Activated CD4-positive, alpha-beta memory T cell treated with anti-CD3 and anti-CD28 coated beads for 36 hours (primary cell): ENCODE measurements at regions of chr2 and their contacts with region 1.

Region 1: DNA sequence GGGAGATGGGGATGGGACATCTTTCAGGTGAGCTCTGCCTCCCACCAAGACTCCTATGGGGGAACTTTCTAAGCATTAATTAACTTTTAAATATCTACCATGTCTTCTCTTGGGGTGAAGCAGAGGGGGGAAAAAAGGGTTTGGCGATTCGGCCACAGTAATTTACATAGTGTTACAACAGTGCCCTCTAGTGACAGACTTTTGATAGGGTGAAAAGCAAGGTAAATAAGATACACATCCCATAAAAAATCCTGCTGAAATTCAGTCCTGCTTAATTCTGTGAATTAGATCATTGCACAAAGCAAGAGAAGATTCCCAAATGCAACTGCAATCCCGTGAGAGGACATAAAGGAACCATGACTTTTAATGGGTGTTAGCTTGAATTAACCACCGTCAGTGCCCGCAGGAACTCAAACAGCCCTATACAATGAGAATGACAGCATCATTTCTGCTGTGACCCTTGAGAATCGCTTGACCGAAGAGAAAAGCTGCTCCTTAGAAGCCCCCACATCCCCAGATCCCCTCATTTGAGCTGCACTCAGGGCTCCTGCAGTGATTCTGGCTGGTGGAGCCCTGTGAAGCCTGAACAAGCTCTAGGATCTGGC is 32.8 kb downstream of the FAM124B start:
- DNase-seq: no peak
- H3K4me3 Mint-ChIP-seq: no peak overlapping the region
- H3K27ac Mint-ChIP-seq: no peak overlapping the region
- H3K4me1 Mint-ChIP-seq: no peaks in the 10 kb centered on the region
- H3K27me3 Mint-ChIP-seq: no peaks in the 10 kb centered on the region

Region 2: DNA sequence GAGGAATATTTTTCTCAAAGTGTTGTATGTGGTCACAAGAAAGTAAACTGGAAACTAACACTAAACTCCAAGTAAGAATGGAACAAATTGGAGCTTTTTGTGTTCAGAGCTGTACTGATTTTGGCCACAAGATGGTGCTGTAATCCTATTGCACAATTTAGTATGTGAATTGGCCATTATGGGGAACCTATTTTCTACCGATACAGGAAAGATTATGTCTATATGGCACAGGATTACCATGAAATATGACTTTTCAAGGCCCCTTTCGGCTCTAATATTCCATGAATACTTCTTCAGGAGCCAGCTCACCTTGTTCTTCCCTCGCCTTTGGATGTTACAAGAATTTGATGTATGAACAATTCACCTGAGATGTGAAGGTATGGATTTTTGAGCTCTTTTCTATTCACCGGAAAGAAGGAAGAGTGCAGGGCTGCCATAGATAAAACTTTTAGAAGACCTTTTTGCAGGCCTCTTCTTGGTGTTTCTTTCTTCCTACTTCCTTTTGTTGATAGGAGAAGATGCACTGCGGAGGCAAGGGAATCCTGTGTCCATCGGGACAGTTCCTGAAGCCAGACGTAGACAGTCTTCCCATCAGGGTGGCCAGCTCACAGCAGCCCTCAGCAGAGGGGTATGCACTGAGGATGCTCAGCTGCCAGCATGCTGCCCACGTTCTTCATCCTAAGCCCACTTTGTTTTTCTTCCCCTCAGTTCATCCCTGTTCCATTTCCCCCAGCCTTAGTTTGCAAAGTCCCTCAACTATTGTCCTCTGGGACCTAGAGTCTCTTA is 398.6 kb before region 1 on chr2:
- CTCF ChIA-PET with region 1: interaction called, 16 read pairs
- POLR2A ChIA-PET with region 1: no interaction called
- intact Hi-C with region 1: loop called (anchors 2 kb)
- DNase-seq: peak; percentile 42
- H3K4me3 Mint-ChIP-seq: no peak overlapping the region
- H3K27ac Mint-ChIP-seq: no peak overlapping the region
- H3K4me1 Mint-ChIP-seq: peaks cover 12% of the 10 kb centered on the region
- H3K27me3 Mint-ChIP-seq: no peaks in the 10 kb centered on the region

Region 3: DNA sequence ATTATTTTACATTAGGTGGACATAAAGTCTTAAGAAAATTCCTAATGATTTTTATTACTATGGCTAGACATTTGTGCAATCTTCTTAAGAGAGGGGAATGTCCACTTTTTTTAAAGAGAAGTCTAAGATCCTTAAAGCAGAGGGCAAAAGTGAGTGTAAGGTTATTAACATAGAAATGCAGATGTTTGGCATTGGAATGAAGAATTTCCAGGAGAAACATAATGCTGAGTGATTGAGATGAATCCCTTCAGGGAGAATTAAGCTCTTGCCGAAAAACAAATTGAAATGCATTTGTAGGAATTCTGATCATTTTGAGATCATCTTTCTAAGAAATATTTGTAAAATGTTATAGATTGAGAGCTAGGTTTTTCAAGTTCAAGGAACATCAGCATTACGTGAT is 17.7 kb after region 1 on chr2:
- CTCF ChIA-PET with region 1: interaction called, 15 read pairs
- POLR2A ChIA-PET with region 1: no interaction called
- intact Hi-C with region 1: no loop called
- DNase-seq: no peak
- H3K4me3 Mint-ChIP-seq: no peak overlapping the region
- H3K27ac Mint-ChIP-seq: no peak overlapping the region
- H3K4me1 Mint-ChIP-seq: no peaks in the 10 kb centered on the region
- H3K27me3 Mint-ChIP-seq: no peaks in the 10 kb centered on the region

Region 4: DNA sequence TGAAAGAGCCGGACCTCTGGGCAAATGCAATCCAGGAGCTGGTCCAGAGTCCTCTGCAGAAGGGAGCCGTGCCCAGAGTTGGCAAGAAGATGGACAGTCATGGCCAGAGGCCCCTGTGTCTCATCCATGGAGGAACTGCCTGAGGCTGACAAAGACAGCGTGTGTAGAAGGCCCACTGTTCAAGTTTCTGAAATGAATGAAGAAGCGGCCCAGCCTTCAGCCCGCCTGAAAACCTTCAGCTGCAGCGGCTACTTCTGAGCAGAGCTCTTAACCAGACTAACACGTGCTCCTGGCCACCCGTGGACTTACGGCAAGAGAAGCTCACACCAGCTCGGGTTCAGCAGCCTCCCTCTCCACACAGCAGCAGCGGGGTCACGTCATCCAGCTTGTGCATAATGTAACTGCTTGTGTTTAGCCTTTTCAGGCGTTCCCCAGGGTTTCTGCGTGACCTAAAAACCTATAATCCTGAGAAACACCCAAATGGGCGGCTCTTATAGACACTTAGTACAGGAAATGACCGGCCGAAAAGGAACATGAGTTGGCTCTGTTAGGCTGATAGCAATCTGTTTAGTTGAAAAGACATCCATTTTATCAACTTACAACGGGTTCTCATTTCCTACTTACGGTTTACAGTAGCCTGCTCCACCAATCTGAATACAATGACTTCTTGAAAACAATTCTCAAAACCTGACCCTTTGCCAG is 32.7 kb after region 1 on chr2 and contains the start of gene FAM124B:
- CTCF ChIA-PET with region 1: interaction called, 13 read pairs
- POLR2A ChIA-PET with region 1: no interaction called
- intact Hi-C with region 1: no loop called
- DNase-seq: peak; percentile 61
- H3K4me3 Mint-ChIP-seq: peak within 1 kb of the TSS; percentile 65
- H3K27ac Mint-ChIP-seq: peak within 1 kb of the TSS; percentile 57
- H3K4me1 Mint-ChIP-seq: peaks cover 5% of the 10 kb centered on the region
- H3K27me3 Mint-ChIP-seq: peaks cover 10% of the 10 kb centered on the region
- total RNA-seq, gene FAM124B: 0.39 to 0.40 TPM

Region 5: DNA sequence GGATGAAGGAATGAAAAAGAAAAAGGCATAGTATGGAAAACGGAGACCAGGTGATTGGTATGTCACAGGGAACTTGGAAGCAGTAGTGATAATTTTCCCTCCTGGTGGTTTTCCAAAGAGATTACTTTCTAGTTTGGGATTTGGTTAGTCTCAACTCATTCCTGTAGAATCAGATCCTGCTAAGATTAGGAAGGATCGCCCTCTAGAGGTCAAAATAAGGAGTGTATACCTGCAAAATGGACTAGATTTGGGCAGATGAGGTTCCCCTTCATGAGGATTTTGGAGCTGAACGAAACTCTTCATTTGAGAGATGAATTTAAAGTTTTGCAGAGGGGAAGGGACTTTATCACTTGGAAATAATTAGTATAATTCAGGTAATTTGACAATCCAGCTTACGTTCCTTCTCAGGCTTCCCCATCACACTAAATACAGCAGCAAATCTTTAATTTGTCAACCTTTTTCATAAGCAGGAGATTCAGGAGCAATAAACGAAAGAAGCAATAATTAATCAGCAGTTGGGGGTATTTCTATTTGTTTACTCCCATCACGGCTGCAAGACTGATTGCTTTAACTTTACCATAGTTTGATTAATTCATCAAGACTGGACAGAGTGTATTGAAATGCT is 281.8 kb after region 1 on chr2:
- CTCF ChIA-PET with region 1: interaction called, 33 read pairs
- POLR2A ChIA-PET with region 1: no interaction called
- intact Hi-C with region 1: no loop called
- DNase-seq: no peak
- H3K4me3 Mint-ChIP-seq: no peak overlapping the region
- H3K27ac Mint-ChIP-seq: no peak overlapping the region
- H3K4me1 Mint-ChIP-seq: peaks cover 2% of the 10 kb centered on the region
- H3K27me3 Mint-ChIP-seq: peaks cover 1% of the 10 kb centered on the region